Endothelial cell of umbilical vein (primary cell): ENCODE measurements at regions of chr10 and their contacts with region 1.

Region 1: GRCh38 chr10:71569775-71570588 is 149.6 kb downstream of the C10orf105 start:
- DNase-seq: peak; percentile 43
- H3K4me3 ChIP-seq: no peak overlapping the region
- H3K27ac ChIP-seq: no peak overlapping the region
- H3K4me1 ChIP-seq: no peaks in the 10 kb centered on the region
- H3K27me3 ChIP-seq: peaks cover 2 to 4% of the 10 kb centered on the region in 2 experiments
- CTCF ChIP-seq: peak; percentile 71 to 81
- POLR2A ChIP-seq: no peak

Region 2: DNA sequence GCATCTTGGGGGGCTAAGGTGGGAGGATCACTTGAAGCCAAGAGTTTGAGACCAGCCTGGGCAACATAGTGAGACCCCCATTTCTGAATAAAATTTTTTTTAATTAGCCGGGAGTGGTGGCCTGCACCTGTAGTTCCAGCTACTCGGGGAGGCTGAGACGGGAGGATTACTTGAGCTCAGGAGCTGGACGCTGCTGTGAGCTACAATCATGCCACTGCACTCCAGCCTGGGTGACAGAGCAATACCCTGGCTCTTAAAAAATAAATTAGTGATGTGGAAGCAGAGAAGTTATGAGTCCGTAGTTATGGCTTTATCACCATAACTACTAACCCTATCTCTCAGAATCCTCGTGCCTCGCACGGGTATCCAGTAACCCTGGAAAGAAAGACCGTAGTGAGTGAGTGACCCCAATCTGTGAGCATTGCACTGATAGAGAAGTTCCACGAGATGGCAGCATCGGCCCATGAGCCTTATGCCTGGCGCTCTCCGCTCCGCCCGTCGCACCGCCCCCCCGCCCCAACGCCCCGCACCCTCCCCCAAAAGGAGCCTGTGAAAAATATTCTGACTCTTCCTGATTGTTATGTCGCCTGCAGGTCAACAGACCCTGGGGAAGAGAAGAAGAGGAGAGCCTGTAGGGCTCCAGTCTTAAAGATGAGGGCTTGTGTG is 255.8 kb before region 1 on chr10:
- CTCF ChIA-PET with region 1: interaction called, 111 read pairs
- POLR2A ChIA-PET with region 1: no interaction called
- dilution Hi-C with region 1: no loop called
- intact Hi-C with region 1: loop called (anchors 1 kb)
- DNase-seq: peak; percentile 28
- H3K4me3 ChIP-seq: no peak overlapping the region
- H3K27ac ChIP-seq: no peak overlapping the region
- H3K4me1 ChIP-seq: no peaks in the 10 kb centered on the region
- H3K27me3 ChIP-seq: peaks cover 16 to 20% of the 10 kb centered on the region in 2 experiments
- CTCF ChIP-seq: peak; percentile 40 to 81
- POLR2A ChIP-seq: no peak

Region 3: DNA sequence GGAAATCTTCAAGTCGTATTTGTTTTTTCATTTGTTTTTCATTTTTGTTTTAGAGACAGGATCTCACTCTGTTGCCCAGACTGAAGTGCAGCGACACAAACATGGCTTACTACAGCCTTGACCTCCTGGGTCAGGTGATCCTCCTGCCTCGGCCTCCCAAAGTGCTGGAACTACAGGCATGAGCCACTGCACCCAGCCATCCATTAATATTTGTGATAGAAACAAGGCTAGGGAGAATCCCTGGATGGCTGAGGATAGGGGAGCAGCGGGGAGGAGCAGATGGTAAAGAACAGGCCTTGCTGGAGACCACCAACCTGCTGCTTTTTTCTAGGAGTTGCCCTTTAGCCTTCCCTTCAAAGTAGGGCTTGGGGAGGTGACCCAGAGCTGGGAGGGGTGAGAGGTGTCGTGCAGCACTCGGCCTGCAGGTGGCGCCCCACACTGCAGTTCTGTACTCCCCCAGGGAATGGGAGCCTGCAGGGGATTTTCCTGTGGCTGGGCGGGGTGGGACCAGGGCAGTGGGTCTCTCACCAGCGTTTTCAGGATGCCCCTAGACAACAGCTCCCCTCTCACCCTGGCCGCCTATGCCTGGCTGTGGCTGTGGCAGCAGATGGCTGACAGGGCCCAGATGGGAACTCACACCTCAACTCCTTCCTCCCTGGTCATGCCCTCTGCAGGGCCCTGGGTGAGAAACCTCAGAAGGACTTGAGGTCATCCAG is 185.9 kb before region 1 on chr10:
- CTCF ChIA-PET with region 1: interaction called, 59 read pairs
- POLR2A ChIA-PET with region 1: no interaction called
- dilution Hi-C with region 1: no loop called
- intact Hi-C with region 1: loop called (anchors 1 kb)
- DNase-seq: peak; percentile 42
- H3K4me3 ChIP-seq: no peak overlapping the region
- H3K27ac ChIP-seq: no peak overlapping the region
- H3K4me1 ChIP-seq: no peaks in the 10 kb centered on the region
- H3K27me3 ChIP-seq: peaks cover 6 to 8% of the 10 kb centered on the region in 2 experiments
- CTCF ChIP-seq: peak; percentile 91 to 98
- POLR2A ChIP-seq: no peak

Region 4: GRCh38 chr10:71396084-71396720 is 173.8 kb before region 1 on chr10:
- CTCF ChIA-PET with region 1: interaction called, 30 read pairs
- POLR2A ChIA-PET with region 1: no interaction called
- dilution Hi-C with region 1: no loop called
- intact Hi-C with region 1: no loop called
- DNase-seq: no peak
- H3K4me3 ChIP-seq: no peak overlapping the region
- H3K27ac ChIP-seq: no peak overlapping the region
- H3K4me1 ChIP-seq: no peaks in the 10 kb centered on the region
- H3K27me3 ChIP-seq: peaks cover 49 to 61% of the 10 kb centered on the region in 2 experiments
- CTCF ChIP-seq: peak in 1 of 2 donors; percentile 30
- POLR2A ChIP-seq: no peak

Region 5: GRCh38 chr10:71486484-71487114 is 83.4 kb before region 1 on chr10:
- CTCF ChIA-PET with region 1: interaction called, 25 read pairs
- POLR2A ChIA-PET with region 1: no interaction called
- dilution Hi-C with region 1: no loop called
- intact Hi-C with region 1: loop called (anchors 1 kb)
- DNase-seq: peak; percentile 15
- H3K4me3 ChIP-seq: no peak overlapping the region
- H3K27ac ChIP-seq: no peak overlapping the region
- H3K4me1 ChIP-seq: no peaks in the 10 kb centered on the region
- H3K27me3 ChIP-seq: no peaks in the 10 kb centered on the region
- CTCF ChIP-seq: peak; percentile 66 to 80
- POLR2A ChIP-seq: no peak

Region 6: GRCh38 chr10:71558991-71559390 is 11.0 kb before region 1 on chr10:
- CTCF ChIA-PET with region 1: interaction called, 29 read pairs
- POLR2A ChIA-PET with region 1: no interaction called
- dilution Hi-C with region 1: no loop called
- intact Hi-C with region 1: no loop called
- DNase-seq: no peak
- H3K4me3 ChIP-seq: no peak overlapping the region
- H3K27ac ChIP-seq: no peak overlapping the region
- H3K4me1 ChIP-seq: no peaks in the 10 kb centered on the region
- H3K27me3 ChIP-seq: peaks cover 6 to 9% of the 10 kb centered on the region in 2 experiments
- CTCF ChIP-seq: no peak
- POLR2A ChIP-seq: no peak

Region 7: DNA sequence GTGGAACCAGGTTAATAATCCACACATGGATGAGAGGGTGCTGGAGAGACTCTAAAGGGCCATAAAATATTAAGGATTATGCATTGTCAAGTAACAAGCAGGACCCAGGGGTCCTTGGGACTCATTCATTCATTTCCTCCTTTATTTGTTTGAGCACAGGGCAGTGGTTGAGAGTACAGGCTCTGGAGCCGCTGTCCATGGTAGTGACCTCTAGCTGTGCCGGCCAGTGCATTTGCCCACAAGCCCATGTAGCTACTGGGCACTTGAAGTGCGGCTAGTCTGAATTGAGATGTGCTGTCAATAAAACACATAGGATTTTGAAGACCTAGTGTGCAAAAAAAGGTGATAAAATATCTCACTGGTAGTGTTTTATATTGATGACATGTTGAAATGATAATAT is 12.0 kb after region 1 on chr10:
- CTCF ChIA-PET with region 1: interaction called, 15 read pairs
- POLR2A ChIA-PET with region 1: no interaction called
- dilution Hi-C with region 1: no loop called
- intact Hi-C with region 1: no loop called
- DNase-seq: peak; percentile 34
- H3K4me3 ChIP-seq: no peak overlapping the region
- H3K27ac ChIP-seq: no peak overlapping the region
- H3K4me1 ChIP-seq: no peaks in the 10 kb centered on the region
- H3K27me3 ChIP-seq: peaks cover 0 to 3% of the 10 kb centered on the region in 2 experiments
- CTCF ChIP-seq: no peak
- POLR2A ChIP-seq: no peak